ENCODE measurements at regions of chr2 and their contacts with region 1.

Region 1: DNA sequence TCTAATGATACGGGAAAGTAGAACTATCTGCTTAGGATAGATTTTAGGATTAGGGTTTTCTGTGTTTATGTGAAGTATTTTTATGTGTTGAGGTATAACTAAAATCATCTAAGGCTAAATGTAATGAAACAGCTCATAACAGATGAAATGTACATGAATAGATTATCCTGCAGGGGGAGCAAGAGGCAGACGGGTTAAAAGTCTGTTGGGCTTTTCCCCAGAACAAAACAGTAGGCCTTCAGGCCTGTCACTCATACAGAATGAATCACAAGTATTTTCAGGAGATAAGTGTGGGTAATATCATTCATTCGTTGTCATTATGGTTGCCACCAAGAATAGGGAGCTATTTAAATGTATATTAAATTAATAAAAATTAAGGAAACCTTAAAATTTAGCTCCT is 107.9 kb upstream of the IL1R2 start:
- DNase-seq: peak; percentile 72
- H3K4me3 Mint-ChIP-seq: no peak overlapping the region
- H3K27ac Mint-ChIP-seq: no peak overlapping the region
- H3K4me1 Mint-ChIP-seq: peaks cover 7% of the 10 kb centered on the region
- H3K27me3 Mint-ChIP-seq: no peaks in the 10 kb centered on the region

Region 2: GRCh38 chr2:101931404-101931803 is 47.5 kb after region 1 on chr2:
- intact Hi-C with region 1: no loop called
- DNase-seq: no peak
- H3K4me3 Mint-ChIP-seq: no peak overlapping the region
- H3K27ac Mint-ChIP-seq: peak overlapping the region; percentile 25
- H3K4me1 Mint-ChIP-seq: peaks cover 5% of the 10 kb centered on the region
- H3K27me3 Mint-ChIP-seq: peaks cover 5% of the 10 kb centered on the region

Region 3: GRCh38 chr2:102129951-102130646 is 246.2 kb after region 1 on chr2:
- intact Hi-C with region 1: no loop called
- DNase-seq: no peak
- H3K4me3 Mint-ChIP-seq: no peak overlapping the region
- H3K27ac Mint-ChIP-seq: no peak overlapping the region
- H3K4me1 Mint-ChIP-seq: peaks cover 5% of the 10 kb centered on the region
- H3K27me3 Mint-ChIP-seq: peaks cover 10% of the 10 kb centered on the region

Region 4: GRCh38 chr2:102449370-102449974 is 565.6 kb after region 1 on chr2:
- intact Hi-C with region 1: loop called (anchors 2 kb)
- DNase-seq: peak; percentile 91
- H3K4me3 Mint-ChIP-seq: no peak overlapping the region
- H3K27ac Mint-ChIP-seq: no peak overlapping the region
- H3K4me1 Mint-ChIP-seq: peaks cover 12% of the 10 kb centered on the region
- H3K27me3 Mint-ChIP-seq: no peaks in the 10 kb centered on the region